ENCODE measurements at regions of chr6 and their contacts with region 1.

Region 1: GRCh38 chr6:28090917-28091586 is 10.7 kb downstream of the ZNF165 start:
- DNase-seq: no peak
- H3K4me3 ChIP-seq: peak overlapping the region; percentile 54
- H3K27ac ChIP-seq: no peak overlapping the region
- H3K27me3 ChIP-seq: no peaks in the 10 kb centered on the region
- CTCF ChIP-seq: no peak

Region 2: GRCh38 chr6:28104392-28105244 is 13.6 kb after region 1 on chr6:
- CTCF ChIA-PET with region 1: interaction called, 20 read pairs
- POLR2A ChIA-PET with region 1: no interaction called
- DNase-seq: no peak
- H3K4me3 ChIP-seq: peak overlapping the region; percentile 78
- H3K27ac ChIP-seq: peak overlapping the region; percentile 31
- H3K27me3 ChIP-seq: no peaks in the 10 kb centered on the region
- CTCF ChIP-seq: peak; percentile 70